Spleen (tissue), 13 donors: ENCODE measurements at regions of chr6 and their contacts with region 1.

Region 1: DNA sequence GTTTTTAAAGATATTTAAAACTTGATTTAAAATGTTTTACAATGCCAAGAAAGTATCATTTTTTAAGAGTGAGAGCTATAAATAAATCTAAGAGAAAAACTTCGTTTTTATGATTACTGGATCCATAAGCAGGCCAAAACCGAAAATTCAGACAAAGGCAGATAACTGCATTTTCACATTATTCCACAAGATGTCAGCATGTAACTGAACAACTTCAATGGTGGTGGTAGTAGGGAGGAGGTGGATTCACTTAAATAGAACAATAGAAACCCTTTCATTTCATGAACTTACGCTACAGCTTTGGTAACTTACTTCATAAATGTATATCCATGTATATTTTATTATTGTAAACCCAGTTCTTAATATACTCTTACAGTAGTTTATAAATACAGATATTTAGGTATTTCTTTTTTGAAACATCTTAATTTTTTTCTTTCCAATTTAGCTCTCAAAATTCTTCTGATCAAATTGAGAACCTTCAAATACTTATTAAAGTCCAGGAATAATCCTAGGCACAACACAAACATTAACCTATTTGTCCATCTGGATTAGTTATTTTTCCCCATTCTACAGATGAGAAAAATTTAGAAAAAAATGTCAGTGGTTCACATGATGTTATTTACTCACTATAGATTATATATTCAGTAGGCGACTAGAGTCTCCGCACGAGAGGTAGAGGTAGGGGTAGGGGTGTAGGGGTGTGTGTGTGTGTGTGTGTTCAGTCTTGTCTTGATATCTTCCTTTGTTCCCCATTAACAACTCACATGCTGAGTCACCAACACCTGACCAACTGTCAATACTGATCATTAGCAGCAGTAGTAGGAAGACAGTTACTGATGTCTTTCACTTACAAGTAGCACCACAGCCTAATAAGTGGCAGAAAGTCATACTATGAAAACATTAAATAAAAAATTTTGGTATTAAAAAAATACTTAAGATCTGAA is 111.5 kb downstream of the ARHGAP18 start:
- DNase-seq: no peak
- H3K4me3 ChIP-seq: no peak overlapping the region
- H3K27ac ChIP-seq: no peak overlapping the region
- H3K4me1 ChIP-seq: peaks cover 0 to 17% (median 7%) of the 10 kb centered on the region in 6 donors
- H3K27me3 ChIP-seq: no peaks in the 10 kb centered on the region
- CTCF ChIP-seq: peak; percentile 73 to 94 (median 84)
- POLR2A ChIP-seq: no peak

Region 2: GRCh38 chr6:129719692-129720091 is 121.2 kb after region 1 on chr6:
- intact Hi-C with region 1: loop called (anchors 10 kb)
- DNase-seq: no peak
- H3K4me3 ChIP-seq: no peak overlapping the region
- H3K27ac ChIP-seq: no peak overlapping the region
- H3K4me1 ChIP-seq: no peaks in the 10 kb centered on the region
- H3K27me3 ChIP-seq: no peaks in the 10 kb centered on the region
- CTCF ChIP-seq: no peak
- POLR2A ChIP-seq: no peak

Region 3: GRCh38 chr6:130020907-130021629 is 422.6 kb after region 1 on chr6:
- intact Hi-C with region 1: loop called (anchors 10 kb)
- DNase-seq: peak; percentile 86
- H3K4me3 ChIP-seq: peak overlapping the region; percentile 71 to 97 (median 80)
- H3K27ac ChIP-seq: peak overlapping the region; percentile 91 to 98 (median 95)
- H3K4me1 ChIP-seq: peaks cover 3 to 32% (median 23%) of the 10 kb centered on the region in 6 donors
- H3K27me3 ChIP-seq: no peaks in the 10 kb centered on the region
- CTCF ChIP-seq: peak; percentile 70 to 87 (median 83)
- POLR2A ChIP-seq: no peak